B cell (primary cell): ENCODE measurements at regions of chr17 and their contacts with region 1.

Region 1: DNA sequence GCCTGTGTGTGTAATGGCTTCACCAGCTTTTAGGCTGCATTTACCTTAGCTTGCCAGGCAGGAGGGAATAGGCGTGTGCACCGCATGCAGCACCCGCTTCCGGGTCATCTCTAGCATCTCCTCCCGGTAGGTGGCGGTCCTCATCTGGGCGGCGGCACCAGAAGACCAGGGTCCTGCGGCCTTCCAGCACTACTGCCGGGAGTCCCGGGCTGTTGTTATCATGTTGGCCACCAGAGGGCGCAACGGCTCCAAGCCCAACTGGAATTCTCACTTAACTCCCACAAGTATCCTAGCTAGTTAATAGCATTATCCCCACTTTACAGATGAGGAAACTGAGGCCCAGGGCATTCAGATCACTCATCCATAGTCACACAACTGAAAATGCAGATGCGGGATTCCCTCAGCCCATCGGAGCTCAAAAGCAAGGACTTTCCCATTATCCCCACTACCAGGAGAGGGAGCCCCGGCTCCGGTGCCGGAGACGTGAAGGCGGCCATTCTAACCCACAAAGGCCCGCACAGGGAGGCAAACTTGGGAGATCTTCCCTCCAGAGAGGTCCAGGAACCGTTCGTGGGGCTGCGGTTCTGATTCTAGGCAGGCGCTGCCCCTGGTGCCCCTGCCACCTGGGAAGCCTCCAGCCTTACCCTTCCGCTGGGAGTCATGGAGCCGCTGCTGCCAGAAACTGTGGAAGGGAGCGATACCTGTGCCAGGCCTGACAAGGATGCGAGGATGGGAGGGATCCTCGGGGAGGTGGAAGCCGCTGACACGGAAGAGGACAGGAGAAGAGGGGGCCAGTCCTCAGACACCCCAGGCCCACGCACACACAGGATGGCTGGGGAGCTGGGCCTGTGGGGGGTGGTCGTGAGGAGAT is 23.9 kb downstream of the LGALS9 start:
- DNase-seq: peak; percentile 79
- ATAC-seq: peak; percentile 88
- H3K4me3 ChIP-seq: no peak overlapping the region
- H3K4me3 Mint-ChIP-seq: no peak overlapping the region
- H3K27ac ChIP-seq: no peak overlapping the region
- H3K27ac Mint-ChIP-seq: no peak overlapping the region
- H3K4me1 ChIP-seq: peaks cover 3 to 5% of the 10 kb centered on the region in 2 donors
- H3K4me1 Mint-ChIP-seq: peaks cover 6% of the 10 kb centered on the region
- H3K27me3 ChIP-seq: no peaks in the 10 kb centered on the region
- H3K27me3 Mint-ChIP-seq: no peaks in the 10 kb centered on the region
- CTCF ChIP-seq: peak; percentile 96

Region 2: GRCh38 chr17:27381007-27381501 is 273.8 kb before region 1 on chr17:
- CTCF ChIA-PET with region 1: interaction called, 7 read pairs
- POLR2A ChIA-PET with region 1: no interaction called
- intact Hi-C with region 1: loop called (anchors 1 kb)
- DNase-seq: peak; percentile 79
- ATAC-seq: peak; percentile 95
- H3K4me3 ChIP-seq: no peak overlapping the region
- H3K4me3 Mint-ChIP-seq: no peak overlapping the region
- H3K27ac ChIP-seq: no peak overlapping the region
- H3K27ac Mint-ChIP-seq: no peak overlapping the region
- H3K4me1 ChIP-seq: peaks cover 0 to 4% of the 10 kb centered on the region in 2 donors
- H3K4me1 Mint-ChIP-seq: peaks cover 6% of the 10 kb centered on the region
- H3K27me3 ChIP-seq: peaks cover 0 to 20% (median 3%) of the 10 kb centered on the region in 4 experiments
- H3K27me3 Mint-ChIP-seq: peaks cover 18% of the 10 kb centered on the region
- CTCF ChIP-seq: peak; percentile 97

Region 3: DNA sequence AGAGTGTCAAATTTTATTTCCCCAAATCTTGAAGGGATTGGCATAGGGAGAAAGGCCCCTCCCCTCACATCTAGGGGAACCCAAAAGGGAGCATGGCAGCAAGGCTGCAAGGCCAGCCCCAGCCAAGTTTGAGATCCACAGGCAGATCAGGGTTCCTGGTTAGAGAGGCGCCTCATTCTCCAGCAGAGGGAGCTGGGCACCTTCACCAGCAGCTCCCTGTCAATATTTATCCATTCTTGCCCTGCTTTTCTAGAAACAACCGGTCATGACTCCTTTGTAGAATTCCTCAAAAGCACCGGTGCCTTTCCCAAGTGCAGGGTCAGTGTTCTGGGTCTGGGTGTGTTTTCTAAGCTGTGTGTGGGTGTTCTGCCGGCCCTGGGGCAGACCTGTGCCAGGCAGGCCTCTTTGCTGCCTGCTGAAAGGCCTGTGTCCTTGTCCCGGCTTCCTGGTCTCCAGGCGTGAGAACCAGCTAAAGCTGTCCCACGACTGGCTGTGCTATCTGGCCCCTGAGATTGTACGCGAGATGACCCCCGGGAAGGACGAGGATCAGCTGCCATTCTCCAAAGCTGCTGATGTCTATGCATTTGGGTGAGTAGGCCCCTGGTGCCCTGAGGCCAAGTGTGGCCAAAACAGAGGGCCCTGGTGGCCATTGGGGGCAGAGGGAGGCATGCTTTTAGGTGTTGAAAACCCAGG is 45.1 kb before region 1 on chr17:
- CTCF ChIA-PET with region 1: interaction called, 395 read pairs
- POLR2A ChIA-PET with region 1: no interaction called
- intact Hi-C with region 1: no loop called
- DNase-seq: peak; percentile 48
- ATAC-seq: no peak
- H3K4me3 ChIP-seq: no peak overlapping the region
- H3K4me3 Mint-ChIP-seq: no peak overlapping the region
- H3K27ac ChIP-seq: no peak overlapping the region
- H3K27ac Mint-ChIP-seq: no peak overlapping the region
- H3K4me1 ChIP-seq: no peaks in the 10 kb centered on the region
- H3K4me1 Mint-ChIP-seq: no peaks in the 10 kb centered on the region
- H3K27me3 ChIP-seq: no peaks in the 10 kb centered on the region
- H3K27me3 Mint-ChIP-seq: no peaks in the 10 kb centered on the region
- CTCF ChIP-seq: peak; percentile 28

Region 4: DNA sequence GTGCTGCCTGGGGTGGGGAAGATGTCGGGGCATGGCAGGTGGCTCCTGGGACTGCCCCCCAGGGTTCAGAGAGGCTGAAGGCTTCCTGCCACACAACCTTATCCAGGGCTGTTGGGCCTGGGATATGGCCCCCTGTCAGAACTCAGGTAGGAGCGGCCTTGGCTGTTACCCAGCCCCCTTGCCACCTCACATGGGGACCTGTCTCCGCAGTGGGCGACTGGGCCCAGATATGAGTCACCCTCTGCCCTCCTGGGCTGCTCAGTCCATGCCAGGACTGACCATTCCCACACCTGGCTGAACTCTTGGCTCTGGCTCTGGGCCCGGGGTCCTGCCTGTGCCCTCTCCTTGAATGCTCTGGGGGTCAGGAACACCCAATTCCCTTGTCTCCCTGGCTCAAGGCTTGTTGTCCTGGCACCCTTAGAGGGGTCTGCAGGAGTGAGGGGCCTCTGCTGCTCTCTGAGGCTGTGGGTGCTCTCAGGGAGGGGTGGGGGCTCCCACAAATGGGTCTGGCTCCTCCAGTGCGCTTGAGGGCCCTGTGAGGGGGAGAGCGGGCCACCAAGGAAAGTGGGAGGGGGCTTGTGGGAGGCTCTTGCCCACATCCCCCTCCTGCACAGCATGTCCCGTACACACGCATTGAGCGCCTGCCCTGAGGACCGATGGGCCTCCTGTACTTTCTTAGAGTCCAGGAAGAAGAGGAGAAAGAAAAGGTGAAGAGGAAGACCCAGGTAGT is 12.1 kb after region 1 on chr17:
- CTCF ChIA-PET with region 1: interaction called, 11 read pairs
- POLR2A ChIA-PET with region 1: no interaction called
- intact Hi-C with region 1: no loop called
- DNase-seq: no peak
- ATAC-seq: no peak
- H3K4me3 ChIP-seq: no peak overlapping the region
- H3K4me3 Mint-ChIP-seq: no peak overlapping the region
- H3K27ac ChIP-seq: no peak overlapping the region
- H3K27ac Mint-ChIP-seq: no peak overlapping the region
- H3K4me1 ChIP-seq: no peaks in the 10 kb centered on the region
- H3K4me1 Mint-ChIP-seq: no peaks in the 10 kb centered on the region
- H3K27me3 ChIP-seq: no peaks in the 10 kb centered on the region
- H3K27me3 Mint-ChIP-seq: peaks cover 6% of the 10 kb centered on the region
- CTCF ChIP-seq: no peak

Region 5: GRCh38 chr17:27677191-27677590 is 22.3 kb after region 1 on chr17:
- CTCF ChIA-PET with region 1: no interaction called
- POLR2A ChIA-PET with region 1: no interaction called
- intact Hi-C with region 1: no loop called
- DNase-seq: no peak
- ATAC-seq: no peak
- H3K4me3 ChIP-seq: no peak overlapping the region
- H3K4me3 Mint-ChIP-seq: no peak overlapping the region
- H3K27ac ChIP-seq: no peak overlapping the region
- H3K27ac Mint-ChIP-seq: no peak overlapping the region
- H3K4me1 ChIP-seq: no peaks in the 10 kb centered on the region
- H3K4me1 Mint-ChIP-seq: no peaks in the 10 kb centered on the region
- H3K27me3 ChIP-seq: no peaks in the 10 kb centered on the region
- H3K27me3 Mint-ChIP-seq: peaks cover 12% of the 10 kb centered on the region
- CTCF ChIP-seq: no peak

Region 6: DNA sequence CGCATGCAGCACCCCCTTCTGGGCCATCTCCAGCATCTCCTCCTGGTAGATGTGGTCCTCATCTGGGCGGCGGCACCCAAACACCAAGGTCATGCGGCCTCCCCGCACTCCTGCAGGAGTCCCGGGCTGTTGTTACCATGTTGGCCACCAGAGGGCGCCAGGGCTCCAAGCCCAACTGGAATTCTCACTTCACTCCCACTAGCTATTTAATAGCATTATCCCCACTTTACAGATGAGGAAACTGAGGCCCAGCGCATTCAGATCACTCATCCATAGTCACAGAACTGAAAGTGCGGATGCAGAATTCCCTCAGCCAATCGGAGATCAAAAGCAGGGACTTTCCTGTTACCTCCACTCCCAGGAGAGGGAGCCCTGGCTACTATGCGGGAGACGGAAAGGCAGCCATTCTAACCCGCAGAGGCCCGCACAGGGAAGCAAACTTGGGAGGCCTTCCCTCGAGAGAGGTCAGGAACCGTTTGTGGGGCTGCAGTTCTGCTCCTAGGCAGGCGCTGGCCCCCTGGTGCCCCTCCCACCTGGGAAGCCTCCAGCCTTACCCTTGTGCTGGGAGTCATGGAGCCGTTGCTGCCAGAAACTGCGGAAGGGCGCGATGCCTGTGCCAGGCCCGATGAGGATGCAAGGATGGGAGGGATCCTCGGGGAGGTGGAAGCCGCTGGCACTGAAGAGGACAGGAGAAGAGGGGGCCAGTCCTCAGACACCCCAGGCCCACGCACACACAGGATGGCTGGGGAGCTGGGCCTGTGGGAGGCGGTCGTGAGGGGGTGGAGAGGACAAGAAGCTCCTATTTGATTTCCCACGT is 105.4 kb after region 1 on chr17:
- CTCF ChIA-PET with region 1: interaction called, 8 read pairs
- POLR2A ChIA-PET with region 1: no interaction called
- intact Hi-C with region 1: loop called (anchors 2 kb)
- DNase-seq: peak; percentile 72
- ATAC-seq: peak; percentile 56
- H3K4me3 ChIP-seq: no peak overlapping the region
- H3K4me3 Mint-ChIP-seq: no peak overlapping the region
- H3K27ac ChIP-seq: no peak overlapping the region
- H3K27ac Mint-ChIP-seq: no peak overlapping the region
- H3K4me1 ChIP-seq: no peaks in the 10 kb centered on the region
- H3K4me1 Mint-ChIP-seq: peaks cover 3% of the 10 kb centered on the region
- H3K27me3 ChIP-seq: peaks cover 0 to 3% (median 1%) of the 10 kb centered on the region in 4 experiments
- H3K27me3 Mint-ChIP-seq: peaks cover 15% of the 10 kb centered on the region
- CTCF ChIP-seq: peak; percentile 96

Region 7: GRCh38 chr17:27879987-27880608 is 225.2 kb after region 1 on chr17:
- CTCF ChIA-PET with region 1: interaction called, 19 read pairs
- POLR2A ChIA-PET with region 1: no interaction called
- intact Hi-C with region 1: no loop called
- DNase-seq: peak; percentile 71
- ATAC-seq: peak; percentile 74
- H3K4me3 ChIP-seq: no peak overlapping the region
- H3K4me3 Mint-ChIP-seq: no peak overlapping the region
- H3K27ac ChIP-seq: no peak overlapping the region
- H3K27ac Mint-ChIP-seq: no peak overlapping the region
- H3K4me1 ChIP-seq: no peaks in the 10 kb centered on the region
- H3K4me1 Mint-ChIP-seq: no peaks in the 10 kb centered on the region
- H3K27me3 ChIP-seq: no peaks in the 10 kb centered on the region
- H3K27me3 Mint-ChIP-seq: no peaks in the 10 kb centered on the region
- CTCF ChIP-seq: peak; percentile 77